ENCODE measurements at regions of chr5 and their contacts with region 1.

Region 1: GRCh38 chr5:172486451-172486850 is 32.1 kb upstream of the SH3PXD2B start:
- DNase-seq: peak in 4 of 5 donors; percentile 48 to 83 (median 58)
- ATAC-seq: peak; percentile 74 to 87 (median 79)
- H3K4me3 ChIP-seq: no peak overlapping the region
- H3K27ac ChIP-seq: peak overlapping the region in 7 of 12 donors; percentile 25 to 68 (median 51)
- H3K4me1 ChIP-seq: peaks cover 0 to 18% (median 5%) of the 10 kb centered on the region in 12 donors
- H3K27me3 ChIP-seq: no peaks in the 10 kb centered on the region
- CTCF ChIP-seq: no peak
- POLR2A ChIP-seq: no peak

Region 2: GRCh38 chr5:172533399-172534228 is 47.2 kb after region 1 on chr5:
- intact Hi-C with region 1: loop called in 1 of 10 experiments (anchors 5 kb)
- DNase-seq: peak in 2 of 5 donors; percentile 19 to 46
- ATAC-seq: peak; percentile 78 to 95 (median 83)
- H3K4me3 ChIP-seq: no peak overlapping the region
- H3K27ac ChIP-seq: peak overlapping the region; percentile 45 to 88 (median 72)
- H3K4me1 ChIP-seq: peaks cover 10 to 48% (median 25%) of the 10 kb centered on the region in 12 donors
- H3K27me3 ChIP-seq: no peaks in the 10 kb centered on the region
- CTCF ChIP-seq: peak in 1 of 12 donors; percentile 5
- POLR2A ChIP-seq: no peak

Region 3: DNA sequence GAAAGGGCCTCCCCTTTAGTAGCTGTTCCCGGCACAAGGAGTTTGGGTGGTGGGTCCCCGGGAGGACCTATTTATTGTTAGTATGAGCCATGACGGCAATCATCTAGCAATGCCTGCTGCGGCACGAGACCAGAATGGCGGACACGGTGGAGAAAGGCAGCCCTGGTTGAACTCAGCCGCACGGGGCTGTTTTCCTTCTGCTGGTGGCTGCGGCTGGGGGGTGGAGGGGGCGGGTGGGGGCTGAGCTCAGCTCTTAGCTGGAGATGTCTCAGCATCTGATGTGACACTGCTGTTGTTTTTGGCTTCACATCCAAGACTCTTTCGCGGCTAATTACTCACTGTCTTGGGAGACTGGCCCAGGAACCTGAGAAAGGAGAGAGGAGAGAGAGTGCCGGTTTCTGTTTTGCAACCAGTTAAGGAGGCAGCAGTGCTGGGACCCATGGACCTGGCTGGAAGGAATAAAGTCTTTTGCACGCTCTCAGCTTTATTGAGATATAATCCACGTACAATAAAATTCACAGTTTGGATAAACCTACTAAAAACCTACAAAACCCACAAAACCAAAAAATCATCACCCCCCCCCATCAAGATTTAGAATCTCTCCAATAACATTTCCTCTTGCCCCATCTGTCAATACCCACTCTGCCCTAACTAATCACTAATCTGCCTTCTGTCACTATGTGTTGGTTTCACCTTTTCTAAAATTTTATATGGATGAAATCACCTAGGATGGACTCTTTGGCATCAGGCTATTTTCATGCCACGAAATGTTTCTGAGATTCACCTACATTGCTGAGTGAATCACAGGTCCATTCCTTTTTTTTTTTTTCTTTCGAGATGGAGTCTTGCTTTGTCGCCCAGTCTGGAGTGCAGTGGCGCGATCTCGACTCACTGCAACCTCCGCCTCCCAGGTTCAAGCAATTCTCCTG is 72.8 kb after region 1 on chr5:
- intact Hi-C with region 1: loop called in 1 of 10 experiments (anchors 5 kb)
- DNase-seq: peak; percentile 43 to 80 (median 66)
- ATAC-seq: peak; percentile 13 to 75 (median 63)
- H3K4me3 ChIP-seq: peak overlapping the region in 10 of 12 donors; percentile 5 to 50 (median 24)
- H3K27ac ChIP-seq: peak overlapping the region in 11 of 12 donors; percentile 68 to 90 (median 78)
- H3K4me1 ChIP-seq: peaks cover 10 to 46% (median 34%) of the 10 kb centered on the region in 12 donors
- H3K27me3 ChIP-seq: no peaks in the 10 kb centered on the region
- CTCF ChIP-seq: no peak
- POLR2A ChIP-seq: no peak

Region 4: DNA sequence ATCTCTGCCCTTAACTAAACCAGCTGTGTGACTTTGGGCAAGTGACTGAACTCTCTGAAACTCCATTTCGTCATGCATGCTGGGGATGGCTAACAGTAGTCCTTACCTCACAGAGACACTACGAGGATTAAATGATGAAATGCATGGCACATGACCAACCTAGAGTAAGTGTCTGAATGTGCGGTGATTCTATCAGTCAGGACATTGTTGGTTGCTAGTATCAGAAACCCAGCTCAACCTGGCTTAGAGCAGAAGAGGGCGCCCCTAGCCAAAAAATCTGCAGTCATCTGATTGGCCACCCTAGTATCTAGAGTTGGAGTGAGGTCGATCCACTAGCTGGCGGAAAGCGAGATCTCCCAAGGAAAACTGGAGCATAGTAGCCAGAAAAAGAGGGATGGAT is 179.8 kb after region 1 on chr5:
- intact Hi-C with region 1: no loop called
- DNase-seq: no peak
- ATAC-seq: peak in 3 of 4 donors; percentile 46 to 64 (median 64)
- H3K4me3 ChIP-seq: no peak overlapping the region
- H3K27ac ChIP-seq: peak overlapping the region in 10 of 12 donors; percentile 17 to 89 (median 50)
- H3K4me1 ChIP-seq: peaks cover 8 to 89% (median 66%) of the 10 kb centered on the region in 12 donors
- H3K27me3 ChIP-seq: no peaks in the 10 kb centered on the region
- CTCF ChIP-seq: peak in 7 of 12 donors; percentile 17 to 47 (median 32)
- POLR2A ChIP-seq: no peak